GM18951 (cell line): ENCODE measurements at regions of chr2 and their contacts with region 1.

Region 1: DNA sequence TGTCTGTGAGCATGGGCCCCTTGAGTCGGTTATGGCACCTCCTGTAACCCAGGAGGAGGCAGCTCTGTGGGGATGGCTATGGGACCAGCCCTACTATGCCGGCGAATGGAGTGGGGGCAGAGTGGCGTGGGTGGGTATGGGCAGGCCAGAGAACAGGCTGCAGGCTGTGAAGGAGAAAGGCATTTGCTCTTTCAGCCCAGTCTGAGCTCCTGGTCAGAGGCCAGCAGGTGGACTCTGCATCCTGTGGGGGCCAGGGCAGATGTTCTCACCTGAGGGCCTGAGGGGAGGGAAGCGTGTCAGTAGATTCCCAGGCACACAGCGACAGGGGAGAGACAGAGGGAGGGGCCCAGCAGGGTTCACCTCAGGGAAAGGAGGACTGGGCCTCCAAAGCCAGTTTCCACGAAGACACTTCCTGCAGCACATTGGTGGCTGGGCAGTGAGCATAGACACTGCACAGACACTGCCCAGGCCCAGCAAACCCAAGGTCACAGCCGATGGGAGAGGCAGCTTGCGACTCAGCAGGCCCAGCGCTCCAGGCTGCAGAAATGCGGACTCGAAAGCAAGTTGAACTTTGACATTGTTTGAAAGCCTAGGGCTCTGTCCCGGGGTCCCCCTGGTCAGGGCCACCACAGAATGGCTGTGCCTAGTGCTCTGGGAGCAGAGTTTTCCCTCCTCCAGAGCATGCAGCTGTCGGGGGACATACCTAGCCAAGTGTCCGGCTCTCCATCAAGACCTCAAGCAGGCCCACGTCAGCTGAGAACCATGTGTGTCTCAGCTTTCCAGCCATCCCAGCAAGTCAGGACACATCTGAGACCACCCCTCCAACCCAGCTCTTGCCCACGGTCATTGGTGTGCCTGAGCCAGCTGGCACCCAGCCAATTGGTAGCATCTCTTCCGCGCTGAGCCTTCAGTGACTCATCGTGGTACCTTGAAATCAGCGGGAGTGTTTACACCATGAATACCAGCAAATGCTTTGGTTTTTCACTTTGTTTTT is 53.8 kb downstream of the TGOLN2 start:
- POLR2A ChIP-seq: no peak

Region 2: GRCh38 chr2:84905181-84906107 is 368.6 kb before region 1 on chr2 and contains the start of gene TMSB10:
- in situ Hi-C with region 1: loop called (anchors 25 kb)
- POLR2A ChIP-seq: peak; percentile 100

Region 3: DNA sequence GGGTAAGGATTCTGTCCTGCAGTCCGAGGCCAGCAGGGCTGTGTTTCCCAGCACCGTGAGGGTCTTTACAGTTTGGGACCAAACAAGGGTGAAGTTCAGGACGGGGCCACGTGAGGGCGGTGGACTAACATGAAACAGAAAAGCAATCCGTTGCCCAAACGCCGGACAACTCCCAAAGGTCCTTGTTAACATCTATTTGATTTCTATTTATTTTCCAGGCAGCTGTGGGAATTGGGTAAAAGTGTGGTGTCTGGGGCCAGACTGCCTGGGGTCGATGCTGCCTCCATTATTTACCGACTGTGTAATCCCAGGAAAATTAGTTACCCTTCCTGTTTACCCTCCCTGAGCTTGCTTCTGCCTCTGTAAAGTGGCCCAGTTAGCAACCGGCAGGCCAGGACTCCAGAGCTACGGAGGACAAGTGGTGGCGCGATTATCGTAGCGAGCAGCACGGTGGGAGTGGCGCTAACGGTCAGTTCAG is 207.1 kb before region 1 on chr2:
- in situ Hi-C with region 1: loop called (anchors 10 kb)
- POLR2A ChIP-seq: no peak